Posterior vena cava (tissue), 2 donors: ENCODE measurements at regions of chr1 and their contacts with region 1.

Region 1: GRCh38 chr1:33541966-33542365 is 69.5 kb downstream of the ZSCAN20 start:
- DNase-seq: no peak

Region 2: GRCh38 chr1:33420870-33421775 is 120.8 kb before region 1 on chr1:
- intact Hi-C with region 1: no loop called
- DNase-seq: no peak

Region 3: GRCh38 chr1:33586111-33586510 is 44.1 kb after region 1 on chr1:
- intact Hi-C with region 1: loop called in 1 of 2 experiments (anchors 1 kb)
- DNase-seq: no peak